ENCODE measurements at regions of chr7 and their contacts with region 1.

Region 1: GRCh38 chr7:43925984-43926797 is at the start of gene UBE2D4:
- DNase-seq: peak; percentile 86 to 93
- H3K4me3 ChIP-seq: peak within 1 kb of the TSS; percentile 63 to 69
- H3K27ac ChIP-seq: peak within 1 kb of the TSS; percentile 90 to 95
- H3K4me1 ChIP-seq: peaks cover 0 to 19% (median 0%) of the 10 kb centered on the region in 4 donors
- H3K27me3 ChIP-seq: no peaks in the 10 kb centered on the region
- CTCF ChIP-seq: peak in 1 of 2 experiments; percentile 12

Region 2: GRCh38 chr7:43721193-43721806 is 204.9 kb before region 1 on chr7:
- intact Hi-C with region 1: no loop called
- DNase-seq: no peak
- H3K4me3 ChIP-seq: no peak overlapping the region
- H3K27ac ChIP-seq: no peak overlapping the region
- H3K4me1 ChIP-seq: peaks cover 0 to under 1% (median 0%) of the 10 kb centered on the region in 4 donors
- H3K27me3 ChIP-seq: no peaks in the 10 kb centered on the region
- CTCF ChIP-seq: peak; percentile 53 to 76

Region 3: GRCh38 chr7:43735802-43736541 is 190.2 kb before region 1 on chr7:
- intact Hi-C with region 1: loop called (anchors 10 kb)
- DNase-seq: no peak
- H3K4me3 ChIP-seq: no peak overlapping the region
- H3K27ac ChIP-seq: no peak overlapping the region
- H3K4me1 ChIP-seq: no peaks in the 10 kb centered on the region
- H3K27me3 ChIP-seq: no peaks in the 10 kb centered on the region
- CTCF ChIP-seq: no peak

Region 4: DNA sequence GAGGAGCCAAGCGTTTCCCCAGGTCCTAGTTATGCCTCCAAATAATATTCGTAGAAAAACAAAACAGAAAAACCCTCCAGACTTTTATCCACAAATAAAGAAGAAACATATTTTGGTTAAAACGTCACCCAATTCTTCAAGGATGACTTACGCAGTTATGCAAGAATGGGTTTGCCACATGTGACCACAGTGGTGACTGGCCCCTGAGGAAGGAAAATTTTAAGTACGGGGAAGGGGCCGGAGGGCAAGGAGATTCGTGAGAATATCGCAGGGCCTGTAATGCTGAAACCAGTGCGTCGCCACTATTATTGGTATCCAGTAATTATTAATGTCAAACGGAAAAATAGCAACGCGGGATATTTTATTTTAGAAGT is 56.3 kb before region 1 on chr7:
- intact Hi-C with region 1: loop called (anchors 5 kb)
- DNase-seq: peak; percentile 52 to 80
- H3K4me3 ChIP-seq: peak overlapping the region; percentile 93 to 98
- H3K27ac ChIP-seq: peak overlapping the region; percentile 88 to 95
- H3K4me1 ChIP-seq: peaks cover 0 to 47% (median 34%) of the 10 kb centered on the region in 4 donors
- H3K27me3 ChIP-seq: no peaks in the 10 kb centered on the region
- CTCF ChIP-seq: no peak

Measured in tibial artery (tissue), 4 donors.